ENCODE measurements at regions of chr16 and their contacts with region 1.

Region 1: DNA sequence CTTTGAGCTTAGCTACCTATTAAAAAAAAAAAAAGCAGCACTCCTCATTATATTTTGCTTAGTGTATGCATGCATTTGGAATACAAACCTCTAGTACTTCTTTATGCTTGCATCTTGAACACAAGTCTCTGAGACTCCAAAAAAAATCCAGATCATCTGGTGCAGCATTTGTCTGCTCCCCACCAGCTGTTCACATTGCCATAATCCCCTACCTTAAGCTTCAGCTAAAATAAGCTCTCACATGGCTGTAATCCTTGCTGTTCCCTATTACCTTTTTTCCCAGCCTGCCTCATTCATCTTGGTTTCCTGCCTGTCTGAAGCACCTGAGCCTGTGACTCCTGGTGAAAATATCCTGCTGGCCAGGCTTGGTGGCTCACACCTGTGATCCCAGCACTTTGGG is 7.5 kb upstream of the NFATC2IP start:
- DNase-seq: no peak
- H3K4me3 ChIP-seq: no peak overlapping the region
- CTCF ChIP-seq: no peak

Region 2: GRCh38 chr16:28846080-28846932 is 97.0 kb before region 1 on chr16 and contains the start of gene TUFM:
- CTCF ChIA-PET with region 1: interaction called, 23 read pairs
- POLR2A ChIA-PET with region 1: no interaction called
- DNase-seq: peak; percentile 83
- H3K4me3 ChIP-seq: peak within 1 kb of the TSS; percentile 93
- CTCF ChIP-seq: peak; percentile 83

Region 3: GRCh38 chr16:28863929-28864793 is 79.1 kb before region 1 on chr16:
- CTCF ChIA-PET with region 1: interaction called, 21 read pairs
- POLR2A ChIA-PET with region 1: no interaction called
- DNase-seq: no peak
- H3K4me3 ChIP-seq: peak overlapping the region; percentile 88
- CTCF ChIP-seq: no peak

Region 4: DNA sequence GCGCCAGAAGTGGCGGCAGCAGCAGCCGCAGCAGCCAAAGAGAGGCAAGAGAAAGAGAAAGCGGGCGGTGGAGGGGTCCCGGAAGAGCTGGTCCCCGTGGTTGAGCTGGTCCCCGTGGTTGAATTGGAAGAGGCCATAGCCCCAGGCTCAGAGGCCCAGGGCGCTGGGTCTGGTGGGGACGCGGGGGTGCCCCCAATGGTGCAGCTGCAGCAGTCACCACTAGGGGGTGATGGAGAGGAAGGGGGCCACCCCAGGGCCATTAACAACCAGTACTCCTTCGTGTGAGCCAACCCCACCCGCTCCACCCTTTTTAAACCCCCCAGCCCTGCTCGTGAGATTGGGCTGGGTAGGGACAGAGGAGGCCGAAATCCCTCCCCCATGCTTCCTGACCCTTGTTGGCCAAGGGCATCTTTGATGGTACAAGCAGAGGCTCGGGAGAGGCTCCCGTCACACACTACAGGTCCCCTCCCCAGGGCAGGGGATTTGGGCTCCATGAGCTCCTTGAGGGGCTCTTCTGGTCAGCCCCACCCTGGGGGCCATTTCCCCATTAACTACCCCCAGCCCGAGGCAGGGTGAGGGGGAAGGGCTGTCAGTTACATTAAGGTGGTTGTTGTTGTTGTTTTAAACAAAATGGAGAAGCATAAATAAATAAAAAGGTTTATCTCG is 69.6 kb before region 1 on chr16:
- CTCF ChIA-PET with region 1: interaction called, 27 read pairs
- POLR2A ChIA-PET with region 1: no interaction called
- DNase-seq: no peak
- H3K4me3 ChIP-seq: no peak overlapping the region
- CTCF ChIP-seq: peak; percentile 61

Region 5: GRCh38 chr16:28879841-28880588 is 63.3 kb before region 1 on chr16:
- CTCF ChIA-PET with region 1: interaction called, 27 read pairs
- POLR2A ChIA-PET with region 1: no interaction called
- DNase-seq: no peak
- H3K4me3 ChIP-seq: peak overlapping the region; percentile 75
- CTCF ChIP-seq: peak; percentile 6

Region 6: DNA sequence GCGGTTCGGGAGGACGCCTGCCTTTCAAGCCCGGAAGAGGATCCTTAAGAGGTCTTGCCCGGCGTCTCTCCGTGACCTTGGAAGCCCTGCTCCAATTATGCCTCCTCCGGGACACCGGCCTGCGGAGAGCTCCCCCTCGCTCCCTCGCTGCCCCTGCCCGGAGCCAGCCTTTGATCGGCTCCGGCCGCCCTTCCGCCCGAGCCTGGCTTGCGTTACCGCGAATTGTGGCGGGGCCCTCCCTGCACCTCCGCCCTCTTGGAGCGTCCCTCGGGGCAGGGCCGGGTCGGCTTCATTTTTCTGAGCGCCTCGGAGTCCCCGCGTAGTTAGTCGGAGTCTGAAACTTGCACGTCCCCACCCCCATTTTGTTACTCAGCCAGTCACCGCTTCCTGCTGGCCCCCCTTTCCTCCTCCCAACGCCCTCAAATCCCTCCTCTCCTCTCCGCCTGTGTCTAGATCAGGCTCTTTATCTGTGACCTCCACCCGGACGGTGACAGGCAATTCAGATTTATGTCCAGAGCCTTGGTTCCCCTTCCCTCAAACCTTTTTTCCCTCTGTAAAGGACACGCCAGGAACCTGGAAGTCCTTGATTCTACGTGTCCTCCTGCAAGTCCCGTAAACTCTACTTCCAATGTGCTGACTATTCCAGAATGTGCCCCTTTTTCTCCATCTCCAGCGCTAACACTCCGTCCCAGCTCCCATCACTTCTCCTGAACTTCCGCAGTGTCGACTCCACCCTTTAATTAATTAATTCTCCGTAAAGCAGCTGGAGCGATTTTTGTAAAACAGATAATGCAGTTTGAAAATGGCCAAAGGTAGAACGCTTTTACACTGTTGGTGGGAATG is 17.7 kb before region 1 on chr16:
- CTCF ChIA-PET with region 1: interaction called, 44 read pairs
- POLR2A ChIA-PET with region 1: no interaction called
- DNase-seq: peak; percentile 17
- H3K4me3 ChIP-seq: peak overlapping the region; percentile 82
- CTCF ChIP-seq: no peak

Region 7: DNA sequence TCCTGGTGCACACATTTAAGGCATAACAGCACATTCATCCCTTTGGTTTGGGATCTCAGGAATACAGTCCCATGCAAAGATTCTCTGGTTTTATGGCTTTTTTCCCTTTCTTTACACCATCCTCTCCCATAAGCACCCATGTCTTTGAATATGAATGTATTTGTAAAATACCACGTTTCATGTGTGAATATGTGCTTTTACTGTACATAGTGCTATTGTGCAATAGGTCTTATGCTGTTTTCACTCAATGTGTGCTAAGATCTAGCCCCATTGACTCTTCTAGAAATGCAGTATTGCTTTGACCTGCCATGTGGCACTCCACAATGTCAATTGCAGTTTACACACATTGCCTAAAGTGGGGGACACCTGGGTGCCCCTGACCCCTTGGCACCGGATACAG is 21.2 kb after region 1 on chr16:
- CTCF ChIA-PET with region 1: no interaction called
- POLR2A ChIA-PET with region 1: no interaction called
- DNase-seq: no peak
- H3K4me3 ChIP-seq: no peak overlapping the region
- CTCF ChIP-seq: no peak

Region 8: DNA sequence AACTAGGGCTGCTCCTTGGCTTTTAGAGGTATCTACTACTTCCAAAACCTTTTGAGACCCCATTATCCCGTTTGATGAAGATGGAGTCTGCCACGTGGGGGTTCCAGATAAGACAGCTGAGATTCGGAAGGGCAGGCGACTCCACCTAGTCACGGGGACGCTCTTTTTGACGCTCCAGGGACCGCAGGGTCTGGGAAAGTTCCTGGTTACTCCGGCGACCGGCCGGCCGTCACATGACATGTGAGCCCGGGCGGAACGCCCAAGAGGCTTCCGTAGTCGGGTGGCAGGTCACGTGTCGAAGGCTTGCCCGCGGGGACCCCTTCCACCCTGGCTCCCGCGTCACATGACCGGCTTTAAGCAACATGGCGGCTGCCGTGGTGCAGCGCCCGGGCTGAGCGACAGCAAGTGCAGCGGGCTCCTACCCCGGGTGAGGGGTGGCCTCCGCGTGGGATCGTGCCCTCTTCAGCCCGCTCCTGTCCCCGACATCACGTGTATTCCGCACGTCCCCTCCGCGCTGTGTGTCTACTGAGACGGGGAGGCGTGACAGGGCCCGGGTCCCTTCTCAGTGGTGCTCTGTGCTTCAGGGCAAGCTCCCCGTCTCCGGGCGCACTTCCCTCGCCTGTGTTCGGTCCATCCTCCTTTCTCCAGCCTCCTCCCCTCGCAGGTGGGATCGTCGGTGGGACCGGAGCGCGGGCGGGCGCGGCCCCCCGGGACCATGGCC is 31.3 kb after region 1 on chr16 and contains the start of gene SPNS1:
- CTCF ChIA-PET with region 1: interaction called, 15 read pairs
- POLR2A ChIA-PET with region 1: no interaction called
- DNase-seq: peak; percentile 77
- H3K4me3 ChIP-seq: peak within 1 kb of the TSS; percentile 99
- CTCF ChIP-seq: no peak

Region 9: GRCh38 chr16:28999577-28999976 is 56.3 kb after region 1 on chr16:
- CTCF ChIA-PET with region 1: no interaction called
- POLR2A ChIA-PET with region 1: no interaction called
- DNase-seq: no peak
- H3K4me3 ChIP-seq: no peak overlapping the region
- CTCF ChIP-seq: no peak

Region 10: DNA sequence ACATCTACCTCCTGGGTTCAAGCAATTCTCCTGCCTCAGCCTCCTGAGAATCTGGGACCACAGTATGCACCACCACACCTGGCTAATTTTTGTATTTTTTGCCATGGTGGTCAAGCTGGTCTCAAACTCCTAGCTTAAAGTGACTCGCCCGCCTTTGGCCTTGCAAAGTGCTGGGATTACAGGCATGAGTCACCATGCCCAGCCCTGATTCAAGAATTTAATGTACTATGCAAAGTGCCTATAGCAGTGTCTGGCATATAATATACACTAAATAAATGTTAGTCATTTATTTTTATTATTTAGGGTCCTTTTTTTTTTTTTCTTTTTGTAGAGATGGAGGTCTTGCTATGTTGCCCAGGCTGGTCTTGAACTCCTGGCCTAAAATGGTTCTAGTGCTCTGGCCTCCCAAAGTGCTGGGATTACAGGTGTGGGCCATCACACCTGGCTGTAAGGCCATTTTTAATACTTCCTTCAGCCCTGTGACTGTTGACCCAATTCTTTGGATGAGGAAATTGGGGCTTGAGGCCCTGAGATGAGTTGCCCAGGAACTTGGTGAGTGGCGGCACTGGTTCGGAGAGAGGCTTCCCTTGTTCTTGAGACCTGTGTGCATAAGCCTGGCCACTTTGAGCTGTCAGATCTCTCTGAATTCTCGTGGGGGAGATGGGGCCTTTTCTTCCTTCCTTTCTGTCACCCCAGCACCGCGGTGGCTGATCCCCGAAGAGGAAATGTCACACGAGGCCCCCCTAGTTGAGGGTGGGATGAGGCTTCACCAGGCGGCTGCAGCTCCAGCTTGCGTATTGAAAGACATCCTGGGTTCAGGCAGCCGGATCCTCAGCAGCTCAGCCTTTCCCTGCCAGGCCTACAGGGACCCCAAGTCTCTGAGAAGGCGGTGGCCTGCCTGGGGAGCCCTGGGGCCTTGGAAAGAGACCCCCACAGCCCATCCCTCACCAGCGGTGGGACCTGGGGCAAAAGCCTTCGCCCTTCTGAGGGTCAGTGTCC is 80.3 kb after region 1 on chr16:
- CTCF ChIA-PET with region 1: no interaction called
- POLR2A ChIA-PET with region 1: no interaction called
- DNase-seq: no peak
- H3K4me3 ChIP-seq: no peak overlapping the region
- CTCF ChIP-seq: no peak

Measured in AG04449 (cell line).